Heart left ventricle (tissue), 16 donors: ENCODE measurements at regions of chr10 and their contacts with region 1.

Region 1: DNA sequence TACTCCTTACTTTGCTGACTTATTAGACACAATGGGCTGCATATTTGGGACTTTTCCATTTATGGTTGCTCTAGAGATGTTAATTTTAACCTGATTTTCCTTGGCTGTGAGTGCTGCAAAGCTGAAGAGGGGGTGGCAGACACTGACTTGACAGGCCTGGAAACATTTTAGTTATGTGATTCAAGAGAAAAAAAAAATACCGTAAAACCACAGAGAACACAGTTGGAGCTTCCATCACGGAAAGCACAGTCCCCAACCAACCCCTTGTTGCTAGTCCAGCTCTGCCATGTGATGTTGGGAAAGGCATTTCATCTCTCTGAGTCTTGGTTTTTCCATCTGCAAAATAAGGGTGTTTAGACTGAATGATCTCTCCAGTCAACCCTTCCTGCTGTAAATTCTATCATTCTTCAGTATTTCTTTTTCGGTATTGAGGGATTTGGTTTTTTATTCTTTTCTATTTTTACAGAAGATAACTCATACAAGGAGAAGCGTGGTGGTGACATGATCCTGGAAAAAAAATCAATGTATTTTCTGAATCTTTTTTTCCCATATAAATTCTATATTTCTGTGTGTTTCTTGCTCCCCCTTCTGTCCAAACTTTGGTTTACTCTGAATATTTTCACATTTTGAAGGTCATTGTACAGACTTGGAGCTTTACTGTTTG is 246.1 kb downstream of the REEP3 start:
- DNase-seq: no peak
- ATAC-seq: peak; percentile 22 to 50 (median 42)
- H3K4me3 ChIP-seq: no peak overlapping the region
- H3K27ac ChIP-seq: peak overlapping the region in 10 of 12 donors; percentile 2 to 55 (median 30)
- H3K4me1 ChIP-seq: peaks cover 0 to 17% (median 4%) of the 10 kb centered on the region in 12 donors
- H3K27me3 ChIP-seq: no peaks in the 10 kb centered on the region
- CTCF ChIP-seq: peak; percentile 17 to 60 (median 44)
- POLR2A ChIP-seq: no peak

Region 2: DNA sequence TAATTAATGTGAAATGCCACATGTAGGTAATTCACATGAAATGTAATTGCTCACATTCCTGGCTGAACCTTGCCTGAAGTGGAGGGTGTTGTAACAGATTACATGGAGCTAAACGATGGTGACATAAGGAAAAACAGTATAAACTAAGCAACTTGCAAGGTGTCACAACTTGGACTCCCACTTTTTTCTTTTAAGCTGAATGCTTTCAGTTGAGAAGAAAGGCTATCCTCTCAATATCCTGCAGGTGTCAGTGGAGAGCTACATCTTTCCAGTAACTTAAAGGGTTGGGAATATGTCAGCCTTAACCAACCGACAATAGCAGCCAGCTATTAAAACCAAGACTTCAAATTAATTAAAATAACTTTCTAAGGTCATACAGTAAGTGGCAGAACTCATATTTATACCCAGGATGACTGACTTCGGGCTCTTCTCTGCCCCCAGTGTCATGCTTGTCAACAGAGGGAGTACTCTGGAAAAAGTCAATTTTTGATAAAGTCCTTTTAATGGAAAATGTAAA is 600.5 kb before region 1 on chr10:
- intact Hi-C with region 1: loop called in 5 of 10 experiments (anchors 2 to 10 kb)
- DNase-seq: peak in 1 of 5 donors; percentile 32
- ATAC-seq: peak; percentile 47 to 72 (median 68)
- H3K4me3 ChIP-seq: no peak overlapping the region
- H3K27ac ChIP-seq: peak overlapping the region in 1 of 12 donors; percentile 0
- H3K4me1 ChIP-seq: peaks cover 0 to 37% (median 17%) of the 10 kb centered on the region in 12 donors
- H3K27me3 ChIP-seq: no peaks in the 10 kb centered on the region
- CTCF ChIP-seq: peak; percentile 64 to 92 (median 82)
- POLR2A ChIP-seq: no peak

Region 3: GRCh38 chr10:63657761-63658160 is 109.5 kb before region 1 on chr10:
- intact Hi-C with region 1: no loop called
- DNase-seq: no peak
- ATAC-seq: no peak
- H3K4me3 ChIP-seq: no peak overlapping the region
- H3K27ac ChIP-seq: no peak overlapping the region
- H3K4me1 ChIP-seq: no peaks in the 10 kb centered on the region
- H3K27me3 ChIP-seq: no peaks in the 10 kb centered on the region
- CTCF ChIP-seq: no peak
- POLR2A ChIP-seq: no peak